ENCODE measurements at regions of chr6 and their contacts with region 1.

Region 1: GRCh38 chr6:78810146-78810545 is 57.2 kb upstream of the IRAK1BP1 start:
- DNase-seq: no peak
- ATAC-seq: no peak
- H3K4me3 ChIP-seq: no peak overlapping the region
- H3K4me3 Mint-ChIP-seq: no peak overlapping the region
- H3K27ac ChIP-seq: no peak overlapping the region
- H3K27ac Mint-ChIP-seq: no peak overlapping the region
- H3K4me1 ChIP-seq: no peaks in the 10 kb centered on the region
- H3K4me1 Mint-ChIP-seq: no peaks in the 10 kb centered on the region
- H3K27me3 ChIP-seq: no peaks in the 10 kb centered on the region
- H3K27me3 Mint-ChIP-seq: peaks cover 0 to 42% (median 41%) of the 10 kb centered on the region in 5 donors

Region 2: DNA sequence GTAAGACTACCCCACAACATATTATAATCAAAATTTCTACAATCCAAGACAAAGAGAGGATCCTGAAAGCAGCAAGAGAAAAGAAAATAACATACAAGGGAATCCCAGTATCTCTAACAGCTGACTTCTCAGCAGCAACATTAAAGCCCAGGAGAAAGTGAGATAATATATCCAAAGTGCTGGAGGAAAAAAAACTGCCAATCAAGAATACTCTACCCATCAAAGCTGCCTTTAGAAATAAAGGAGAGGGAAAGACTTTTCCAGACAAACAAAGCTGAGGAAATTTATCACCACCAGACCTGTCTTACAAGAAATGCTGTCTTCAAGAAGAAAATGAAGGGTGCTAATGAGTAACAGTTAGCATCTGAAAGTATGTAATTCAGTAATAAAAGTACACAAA is 13.9 kb after region 1 on chr6:
- CTCF ChIA-PET with region 1: no interaction called
- POLR2A ChIA-PET with region 1: no interaction called
- intact Hi-C with region 1: loop called in 1 of 2 experiments (anchors 1 kb)
- DNase-seq: no peak
- ATAC-seq: no peak
- H3K4me3 ChIP-seq: no peak overlapping the region
- H3K4me3 Mint-ChIP-seq: no peak overlapping the region
- H3K27ac ChIP-seq: no peak overlapping the region
- H3K27ac Mint-ChIP-seq: no peak overlapping the region
- H3K4me1 ChIP-seq: no peaks in the 10 kb centered on the region
- H3K4me1 Mint-ChIP-seq: no peaks in the 10 kb centered on the region
- H3K27me3 ChIP-seq: no peaks in the 10 kb centered on the region
- H3K27me3 Mint-ChIP-seq: peaks cover 0 to 20% (median 8%) of the 10 kb centered on the region in 5 donors

Region 3: GRCh38 chr6:78961513-78961912 is 151.4 kb after region 1 on chr6:
- CTCF ChIA-PET with region 1: no interaction called
- POLR2A ChIA-PET with region 1: no interaction called
- intact Hi-C with region 1: no loop called
- DNase-seq: no peak
- ATAC-seq: no peak
- H3K4me3 ChIP-seq: no peak overlapping the region
- H3K4me3 Mint-ChIP-seq: no peak overlapping the region
- H3K27ac ChIP-seq: no peak overlapping the region
- H3K27ac Mint-ChIP-seq: no peak overlapping the region
- H3K4me1 ChIP-seq: no peaks in the 10 kb centered on the region
- H3K4me1 Mint-ChIP-seq: peaks cover 0 to 3% (median 0%) of the 10 kb centered on the region in 7 donors
- H3K27me3 ChIP-seq: no peaks in the 10 kb centered on the region
- H3K27me3 Mint-ChIP-seq: no peaks in the 10 kb centered on the region

Measured in naive thymus-derived CD4-positive, alpha-beta T cell (primary cell).